Body of pancreas (tissue), 4 donors: ENCODE measurements at regions of chr9 and their contacts with region 1.

Region 1: DNA sequence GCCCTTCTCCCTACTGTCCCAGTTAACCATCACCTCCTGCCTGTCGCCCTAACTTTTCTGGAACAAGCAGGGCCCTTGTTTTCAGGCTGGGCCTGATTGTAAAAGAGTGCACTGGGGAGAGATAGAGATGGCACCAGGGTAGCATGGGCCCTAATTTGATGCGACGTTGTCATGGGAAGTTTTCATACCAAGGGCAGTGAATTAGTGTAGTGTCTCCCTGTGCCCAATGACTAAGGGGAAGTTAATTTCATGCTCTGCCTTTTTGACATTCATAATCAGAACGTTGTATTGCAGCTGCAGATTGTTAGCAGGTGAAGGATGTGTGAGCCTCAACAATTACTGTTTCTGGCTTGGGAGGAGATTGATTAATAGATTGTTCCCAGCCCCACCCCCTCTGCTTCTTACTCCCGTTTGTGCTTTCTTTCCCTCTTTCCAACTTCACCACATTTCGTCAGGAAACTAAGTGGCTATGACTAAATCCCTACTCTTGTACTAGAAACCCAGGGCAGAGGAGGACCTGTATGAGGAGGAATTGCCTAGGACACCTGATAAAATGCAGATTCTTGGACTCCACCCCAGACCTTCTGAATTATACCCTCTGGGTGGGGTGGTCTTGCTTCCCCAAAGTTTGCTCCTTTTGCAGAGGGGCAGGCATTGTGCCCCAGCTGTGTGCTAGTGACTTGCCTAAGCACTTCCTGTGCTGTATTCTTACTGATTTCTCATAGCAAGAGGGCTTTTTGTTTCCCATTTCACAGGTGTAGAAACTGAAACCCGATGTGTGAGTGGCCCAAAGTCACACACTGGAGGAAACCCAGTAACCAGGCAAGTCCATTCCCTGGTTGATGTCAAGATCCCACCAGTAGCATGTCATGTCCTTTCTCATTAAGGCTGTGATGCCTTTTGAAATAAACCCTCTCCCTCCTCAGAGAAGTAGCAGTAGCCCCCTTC is 56.3 kb downstream of the DAB2IP start:
- DNase-seq: no peak
- ATAC-seq: no peak
- H3K4me3 ChIP-seq: no peak overlapping the region
- H3K27ac ChIP-seq: no peak overlapping the region
- H3K4me1 ChIP-seq: peaks cover 4% of the 10 kb centered on the region
- H3K27me3 ChIP-seq: no peaks in the 10 kb centered on the region
- CTCF ChIP-seq: no peak
- POLR2A ChIP-seq: no peak

Region 2: DNA sequence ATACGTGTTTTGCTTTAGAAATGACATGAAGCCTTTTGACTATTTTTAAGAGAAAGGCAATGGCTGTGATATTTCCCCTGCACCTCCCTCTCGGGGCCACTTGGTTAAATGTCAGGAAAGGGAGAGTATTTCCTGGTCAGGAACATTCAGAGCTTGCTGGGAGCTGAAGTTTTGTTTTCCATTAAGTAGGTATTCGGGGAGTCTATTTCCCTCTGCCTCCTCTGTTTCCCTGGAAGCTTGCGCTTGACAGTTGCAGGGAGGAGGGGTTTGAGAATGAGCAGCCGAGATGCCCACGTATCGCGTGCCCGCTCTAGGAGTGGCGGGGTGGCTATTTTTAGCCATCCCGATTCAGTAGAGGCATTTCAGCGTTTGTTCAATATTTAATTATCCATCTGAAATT is 49.6 kb before region 1 on chr9:
- intact Hi-C with region 1: loop called (anchors 5 kb)
- DNase-seq: no peak
- ATAC-seq: peak; percentile 60
- H3K4me3 ChIP-seq: no peak overlapping the region
- H3K27ac ChIP-seq: peak overlapping the region in 3 of 4 donors; percentile 37 to 67 (median 63)
- H3K4me1 ChIP-seq: peaks cover 48% of the 10 kb centered on the region
- H3K27me3 ChIP-seq: no peaks in the 10 kb centered on the region
- CTCF ChIP-seq: peak in 4 of 7 experiments; percentile 20 to 32 (median 29)
- POLR2A ChIP-seq: no peak

Region 3: GRCh38 chr9:121839726-121840500 is 132.2 kb after region 1 on chr9:
- intact Hi-C with region 1: no loop called
- DNase-seq: no peak
- ATAC-seq: no peak
- H3K4me3 ChIP-seq: no peak overlapping the region
- H3K27ac ChIP-seq: no peak overlapping the region
- H3K4me1 ChIP-seq: no peaks in the 10 kb centered on the region
- H3K27me3 ChIP-seq: no peaks in the 10 kb centered on the region
- CTCF ChIP-seq: no peak
- POLR2A ChIP-seq: no peak